GM12878 (cell line): ENCODE measurements at regions of chr16 and their contacts with region 1.

Region 1: DNA sequence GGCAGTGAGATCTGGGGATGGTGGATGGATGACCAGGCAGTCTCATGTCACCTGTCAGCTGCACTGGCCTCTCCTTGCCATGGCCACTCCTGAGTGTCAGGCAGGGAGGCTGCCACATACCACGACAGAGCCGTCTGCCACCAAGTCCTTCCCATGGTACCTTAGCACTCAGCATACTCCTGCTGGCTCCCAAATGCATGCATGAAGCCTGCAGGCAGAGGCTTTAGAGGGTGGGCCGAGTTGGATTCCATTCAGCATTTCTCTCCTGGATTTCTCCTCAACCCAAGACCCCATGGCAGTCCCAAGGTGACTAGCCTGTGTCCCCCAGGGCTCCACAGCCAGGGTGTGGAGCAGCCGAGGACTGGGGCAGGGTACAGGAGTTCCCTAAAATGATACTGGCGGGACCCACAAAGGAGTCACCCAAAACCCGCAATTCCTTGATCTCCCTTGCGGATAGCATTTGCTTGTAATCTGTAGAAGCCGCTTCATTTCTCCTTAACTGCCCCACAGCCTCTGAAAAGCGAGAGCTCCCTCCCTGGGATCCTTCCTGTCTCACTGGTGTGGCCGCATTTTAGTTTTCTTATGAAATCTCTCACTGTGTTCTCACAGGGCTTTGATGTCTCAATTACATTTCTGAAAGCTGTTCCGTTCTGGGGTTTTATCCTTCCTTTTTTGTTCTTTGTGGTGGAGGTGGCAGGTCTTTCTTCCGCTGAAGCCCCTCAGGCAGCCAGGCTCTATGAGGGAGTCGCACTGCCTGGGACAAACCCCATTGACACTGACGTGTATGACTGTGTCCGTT is 141.4 kb downstream of the SOCS1 start:
- DNase-seq: no peak
- ATAC-seq: no peak
- H3K4me3 ChIP-seq: no peak overlapping the region
- H3K27ac ChIP-seq: peak overlapping the region; percentile 52
- H3K4me1 ChIP-seq: peaks cover 39% of the 10 kb centered on the region
- H3K27me3 ChIP-seq: no peaks in the 10 kb centered on the region
- CTCF ChIP-seq: no peak
- EP300 ChIP-seq: no peak
- POLR2A ChIP-seq: no peak
- RAD21 ChIP-seq: no peak

Region 2: DNA sequence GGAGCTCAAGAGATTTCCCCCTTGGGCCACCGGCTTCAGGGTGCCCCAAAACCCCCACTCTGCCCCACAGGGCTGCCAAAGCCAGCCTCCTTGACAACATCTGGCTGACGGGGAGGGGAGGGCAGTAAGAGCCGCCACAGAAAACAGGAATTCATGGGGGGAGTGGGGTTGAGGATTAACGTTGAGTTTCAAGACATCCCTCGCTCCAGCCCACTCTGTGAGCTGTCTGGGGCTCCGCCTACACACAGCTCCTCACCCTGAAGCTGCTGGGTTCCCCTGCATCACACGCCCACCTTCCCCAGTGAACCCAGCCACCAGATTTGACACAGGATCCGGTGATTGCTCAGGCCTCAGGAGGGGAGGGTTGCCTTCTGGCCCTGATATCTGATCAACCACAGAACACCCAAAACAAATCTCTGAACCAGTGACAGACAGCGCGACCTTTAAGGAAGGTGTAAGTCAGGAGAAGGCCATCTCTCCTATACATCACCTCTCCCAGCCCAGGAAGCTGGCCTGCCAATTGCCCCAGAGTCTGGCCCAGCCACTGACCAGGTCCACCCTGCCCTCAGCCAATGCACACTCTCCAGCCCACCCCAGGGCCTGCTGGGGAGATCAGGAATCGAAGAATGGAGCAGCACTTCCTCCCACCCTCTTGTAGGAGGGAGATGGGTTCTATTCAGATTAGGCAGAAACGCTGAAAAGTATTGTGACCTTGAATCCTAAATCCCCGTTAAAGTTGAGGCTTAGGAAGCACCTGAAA is 38.1 kb before region 1 on chr16:
- CTCF ChIA-PET with region 1: interaction called, 3 read pairs
- POLR2A ChIA-PET with region 1: interaction called, 12 read pairs
- RAD21 ChIA-PET with region 1: interaction called, 16 read pairs
- SMC1A ChIA-PET with region 1: interaction called, 9 read pairs
- in situ Hi-C with region 1: no loop called
- intact Hi-C with region 1: no loop called
- DNase-seq: peak; percentile 79
- ATAC-seq: peak; percentile 64
- H3K4me3 ChIP-seq: no peak overlapping the region
- H3K27ac ChIP-seq: peak overlapping the region; percentile 65
- H3K4me1 ChIP-seq: peaks cover 46% of the 10 kb centered on the region
- H3K27me3 ChIP-seq: no peaks in the 10 kb centered on the region
- CTCF ChIP-seq: no peak
- EP300 ChIP-seq: 0 out of 4 replicates have a peak, but pooled peaks of 1 of the 2 experiments have one; percentile 10
- POLR2A ChIP-seq: no peak
- RAD21 ChIP-seq: no peak

Region 3: DNA sequence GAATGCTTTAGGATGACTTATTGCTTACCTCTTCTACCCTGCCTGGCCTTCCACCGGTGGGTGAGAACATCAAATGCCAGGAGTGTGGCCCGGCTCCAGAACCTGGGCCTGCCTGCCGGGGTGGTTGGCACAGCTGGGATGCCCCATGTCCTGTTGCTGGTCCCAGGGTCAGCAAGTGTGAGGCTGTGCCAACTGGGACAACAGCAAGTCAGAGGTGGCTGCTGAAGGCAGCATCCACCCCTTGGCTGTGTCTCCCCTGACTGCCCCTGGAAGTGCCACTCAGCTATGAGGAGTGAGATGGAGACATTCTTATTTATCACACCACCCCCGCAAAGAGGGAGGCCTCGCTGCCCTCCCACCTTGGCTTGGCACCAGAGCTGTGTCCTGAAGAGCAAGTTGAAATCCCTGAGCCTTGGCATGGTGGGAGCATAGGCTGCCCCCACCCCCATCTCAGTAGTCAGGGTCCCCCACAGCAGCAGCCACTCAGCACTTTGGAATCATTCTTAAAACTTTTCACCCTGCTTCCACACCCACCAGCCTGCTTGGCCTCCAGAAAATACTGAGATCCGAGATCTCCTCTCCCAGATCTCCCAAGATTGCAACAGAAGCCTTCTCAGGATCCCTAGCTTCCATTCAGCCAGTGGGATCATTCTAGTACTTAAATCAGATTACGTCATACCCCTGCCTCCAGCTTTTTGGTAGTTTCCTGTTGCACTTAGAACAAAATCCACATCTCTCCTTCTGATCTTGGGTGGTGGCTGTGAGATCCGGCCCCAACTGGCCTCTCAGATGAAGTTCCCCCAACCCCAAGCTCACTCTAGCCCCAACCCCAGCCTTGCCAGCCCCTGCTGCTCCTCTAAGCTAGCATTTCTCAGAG is 13.9 kb after region 1 on chr16:
- CTCF ChIA-PET with region 1: interaction called, 3 read pairs
- POLR2A ChIA-PET with region 1: interaction called, 7 read pairs
- RAD21 ChIA-PET with region 1: interaction called, 11 read pairs
- SMC1A ChIA-PET with region 1: interaction called, 13 read pairs
- in situ Hi-C with region 1: no loop called
- intact Hi-C with region 1: no loop called
- DNase-seq: no peak
- ATAC-seq: no peak
- H3K4me3 ChIP-seq: no peak overlapping the region
- H3K27ac ChIP-seq: no peak overlapping the region
- H3K4me1 ChIP-seq: peaks cover 13% of the 10 kb centered on the region
- H3K27me3 ChIP-seq: no peaks in the 10 kb centered on the region
- CTCF ChIP-seq: no peak
- EP300 ChIP-seq: no peak
- POLR2A ChIP-seq: no peak
- RAD21 ChIP-seq: no peak

Region 4: DNA sequence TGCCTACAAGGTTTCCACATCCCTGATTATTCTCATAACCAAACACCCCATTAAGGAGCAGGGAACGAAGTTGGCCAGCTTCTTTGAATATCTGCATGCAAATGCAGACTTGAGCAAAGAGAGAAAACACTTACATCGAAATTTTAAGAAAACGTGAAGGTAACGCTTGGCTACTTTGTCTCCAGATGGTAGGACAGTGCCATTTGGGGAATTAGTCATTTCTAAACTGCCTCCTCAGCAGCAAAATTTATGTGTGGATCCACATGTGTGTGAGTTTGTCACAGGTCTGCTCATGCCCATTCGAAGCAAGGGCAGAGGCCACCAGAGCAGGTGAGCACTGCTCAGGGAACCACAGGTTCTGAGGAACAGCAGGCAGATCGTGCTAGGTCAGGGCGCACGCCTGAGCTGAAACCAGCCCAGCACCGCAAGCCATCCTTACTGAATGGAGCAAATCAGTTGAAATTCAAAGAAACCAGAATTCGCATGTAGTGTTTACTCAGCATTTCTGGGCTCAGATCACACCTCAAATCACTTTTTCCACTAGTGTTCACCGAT is 61.3 kb after region 1 on chr16:
- CTCF ChIA-PET with region 1: interaction called, 3 read pairs
- POLR2A ChIA-PET with region 1: interaction called, 8 read pairs
- RAD21 ChIA-PET with region 1: interaction called, 5 read pairs
- SMC1A ChIA-PET with region 1: interaction called, 12 read pairs
- in situ Hi-C with region 1: no loop called
- intact Hi-C with region 1: loop called (anchors 5 kb)
- DNase-seq: peak; percentile 95
- ATAC-seq: peak; percentile 63
- H3K4me3 ChIP-seq: no peak overlapping the region
- H3K27ac ChIP-seq: peak overlapping the region; percentile 62
- H3K4me1 ChIP-seq: peaks cover 54% of the 10 kb centered on the region
- H3K27me3 ChIP-seq: no peaks in the 10 kb centered on the region
- CTCF ChIP-seq: no peak
- EP300 ChIP-seq: peak; percentile 32 to 50; a peak in 1 of 4 replicates
- POLR2A ChIP-seq: no peak
- RAD21 ChIP-seq: no peak

Region 5: DNA sequence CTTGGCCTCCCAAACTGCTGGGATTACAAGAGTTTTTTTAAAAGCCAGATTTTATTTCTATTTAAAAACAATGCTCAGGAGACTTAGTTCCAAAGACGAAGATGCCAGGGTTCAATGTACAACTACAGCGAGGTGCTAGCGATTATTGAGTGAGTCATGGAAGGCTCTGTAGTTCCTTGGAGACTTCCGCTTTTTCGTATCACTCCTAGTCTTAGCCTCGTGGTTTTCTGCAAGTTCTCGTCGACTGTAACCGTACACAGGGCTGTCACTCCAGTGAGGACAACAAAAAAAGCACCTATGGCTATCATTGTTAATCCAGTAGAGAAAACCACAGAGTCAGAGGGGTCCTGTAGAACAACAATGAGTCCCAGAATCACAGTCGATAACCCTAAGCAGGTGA is 705.2 kb after region 1 on chr16:
- CTCF ChIA-PET with region 1: no interaction called
- POLR2A ChIA-PET with region 1: no interaction called
- RAD21 ChIA-PET with region 1: no interaction called
- SMC1A ChIA-PET with region 1: no interaction called
- in situ Hi-C with region 1: no loop called
- intact Hi-C with region 1: no loop called
- DNase-seq: no peak
- ATAC-seq: peak; percentile 57
- H3K4me3 ChIP-seq: no peak overlapping the region
- H3K27ac ChIP-seq: no peak overlapping the region
- H3K4me1 ChIP-seq: no peaks in the 10 kb centered on the region
- H3K27me3 ChIP-seq: no peaks in the 10 kb centered on the region
- CTCF ChIP-seq: no peak
- EP300 ChIP-seq: no peak
- POLR2A ChIP-seq: no peak
- RAD21 ChIP-seq: no peak